Calu3 (cell line): ENCODE measurements at regions of chr2 and their contacts with region 1.

Region 1: DNA sequence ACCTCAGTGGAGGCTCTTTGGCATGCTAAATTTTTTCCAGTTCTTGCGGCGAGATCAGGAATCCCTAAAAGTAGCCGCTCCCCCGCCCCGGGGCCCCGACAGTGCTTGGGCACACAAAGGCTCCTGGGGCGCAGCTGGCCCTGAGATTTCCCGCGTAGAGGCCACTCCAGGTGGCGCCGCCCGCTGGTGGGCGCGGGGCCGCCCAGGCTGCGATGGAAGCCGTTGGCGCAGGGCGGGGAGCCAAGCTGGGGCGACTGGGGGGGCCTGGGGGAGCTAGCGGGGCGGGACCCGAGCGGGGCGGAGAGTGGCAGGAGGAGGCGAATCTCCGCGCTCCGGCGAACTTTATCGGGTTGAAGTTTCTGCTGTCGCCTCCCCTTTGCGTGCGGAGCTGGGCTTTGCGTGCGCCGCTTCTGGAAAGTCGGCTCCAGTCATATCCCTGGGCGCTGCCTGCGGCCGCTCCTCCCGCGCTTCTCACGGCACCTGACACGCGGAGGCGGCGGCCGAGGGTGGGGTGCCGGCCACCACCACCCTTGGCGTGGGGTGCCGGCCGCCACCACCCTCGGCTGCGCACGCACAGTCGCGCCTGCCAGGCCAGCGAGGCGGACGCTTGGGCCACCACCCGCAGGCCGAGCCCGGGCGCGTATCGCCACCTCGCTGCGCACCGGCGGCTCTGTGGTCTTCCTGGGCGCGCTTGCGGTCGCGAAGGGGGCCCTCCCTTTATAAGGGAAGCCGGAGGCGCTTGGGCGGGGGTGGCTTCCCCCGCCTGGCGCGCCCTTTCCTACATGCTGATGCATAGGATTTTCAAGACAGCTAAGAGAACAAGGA is 867 bp upstream of the CYP1B1 start:
- DNase-seq: peak; percentile 93
- H3K4me3 Mint-ChIP-seq: peak overlapping the region; percentile 88
- H3K27ac Mint-ChIP-seq: peak overlapping the region; percentile 95
- H3K4me1 Mint-ChIP-seq: peaks cover 37% of the 10 kb centered on the region
- H3K27me3 Mint-ChIP-seq: no peaks in the 10 kb centered on the region
- CTCF ChIP-seq: peak; percentile 62

Region 2: GRCh38 chr2:36238106-36238505 is 1838.7 kb before region 1 on chr2:
- CTCF ChIA-PET with region 1: no interaction called
- intact Hi-C with region 1: no loop called
- DNase-seq: no peak
- H3K4me3 Mint-ChIP-seq: no peak overlapping the region
- H3K27ac Mint-ChIP-seq: no peak overlapping the region
- H3K4me1 Mint-ChIP-seq: no peaks in the 10 kb centered on the region
- H3K27me3 Mint-ChIP-seq: no peaks in the 10 kb centered on the region
- CTCF ChIP-seq: no peak

Region 3: GRCh38 chr2:37947306-37947705 is 129.5 kb before region 1 on chr2:
- CTCF ChIA-PET with region 1: no interaction called
- intact Hi-C with region 1: no loop called
- DNase-seq: no peak
- H3K4me3 Mint-ChIP-seq: no peak overlapping the region
- H3K27ac Mint-ChIP-seq: no peak overlapping the region
- H3K4me1 Mint-ChIP-seq: no peaks in the 10 kb centered on the region
- H3K27me3 Mint-ChIP-seq: no peaks in the 10 kb centered on the region
- CTCF ChIP-seq: no peak

Region 4: GRCh38 chr2:37993143-37993542 is 83.7 kb before region 1 on chr2:
- CTCF ChIA-PET with region 1: interaction called, 31 read pairs
- intact Hi-C with region 1: no loop called
- DNase-seq: no peak
- H3K4me3 Mint-ChIP-seq: peak overlapping the region; percentile 39
- H3K27ac Mint-ChIP-seq: peak overlapping the region; percentile 80
- H3K4me1 Mint-ChIP-seq: peaks cover 36% of the 10 kb centered on the region
- H3K27me3 Mint-ChIP-seq: no peaks in the 10 kb centered on the region
- CTCF ChIP-seq: no peak

Region 5: GRCh38 chr2:38109732-38110181 is 32.9 kb after region 1 on chr2:
- CTCF ChIA-PET with region 1: interaction called, 43 read pairs
- intact Hi-C with region 1: no loop called
- DNase-seq: peak; percentile 29
- H3K4me3 Mint-ChIP-seq: peak overlapping the region; percentile 55
- H3K27ac Mint-ChIP-seq: peak overlapping the region; percentile 91
- H3K4me1 Mint-ChIP-seq: peaks cover 84% of the 10 kb centered on the region
- H3K27me3 Mint-ChIP-seq: no peaks in the 10 kb centered on the region
- CTCF ChIP-seq: no peak

Region 6: GRCh38 chr2:38122344-38122743 is 45.5 kb after region 1 on chr2:
- CTCF ChIA-PET with region 1: interaction called, 20 read pairs
- intact Hi-C with region 1: no loop called
- DNase-seq: no peak
- H3K4me3 Mint-ChIP-seq: no peak overlapping the region
- H3K27ac Mint-ChIP-seq: no peak overlapping the region
- H3K4me1 Mint-ChIP-seq: peaks cover 31% of the 10 kb centered on the region
- H3K27me3 Mint-ChIP-seq: no peaks in the 10 kb centered on the region
- CTCF ChIP-seq: no peak

Region 7: GRCh38 chr2:38315707-38316333 is 239.0 kb after region 1 on chr2:
- CTCF ChIA-PET with region 1: interaction called, 12 read pairs
- intact Hi-C with region 1: no loop called
- DNase-seq: peak; percentile 47
- H3K4me3 Mint-ChIP-seq: no peak overlapping the region
- H3K27ac Mint-ChIP-seq: no peak overlapping the region
- H3K4me1 Mint-ChIP-seq: no peaks in the 10 kb centered on the region
- H3K27me3 Mint-ChIP-seq: no peaks in the 10 kb centered on the region
- CTCF ChIP-seq: peak; percentile 41